H1 (cell line): ENCODE measurements at regions of chr5 and their contacts with region 1.

Region 1: DNA sequence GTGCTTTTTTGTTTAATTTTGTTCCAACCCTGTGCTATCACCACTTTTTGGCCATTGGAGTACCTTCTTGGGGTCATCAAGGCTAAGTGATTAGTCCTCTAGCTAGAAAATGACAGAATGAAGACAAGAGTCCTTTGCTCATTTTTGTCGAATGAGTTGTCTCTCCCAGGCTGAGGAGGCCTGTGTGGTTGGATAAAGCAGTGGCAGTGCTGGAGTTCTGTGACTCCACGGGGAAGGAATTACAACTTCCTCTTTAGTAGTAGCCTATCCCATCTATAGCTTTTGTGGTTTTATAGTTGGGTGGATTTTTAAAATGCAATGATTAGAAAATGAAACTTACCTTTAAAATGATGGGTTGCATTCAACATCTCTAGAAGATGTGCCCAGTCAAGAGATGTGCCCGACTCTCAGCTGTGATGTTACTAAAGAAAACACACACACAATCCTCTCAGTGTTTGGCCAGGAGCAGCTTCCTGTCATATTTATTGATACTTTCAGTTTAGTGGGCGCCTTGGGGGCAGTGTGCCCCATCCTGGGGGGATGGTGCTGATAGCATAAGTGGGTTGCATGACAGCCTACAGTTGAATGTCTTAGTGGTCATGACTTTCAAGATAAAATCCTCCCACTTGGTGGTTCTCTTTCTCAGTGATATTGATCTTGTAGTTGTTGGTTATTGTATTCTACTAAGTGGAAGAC is 11.9 kb downstream of the OTULINL start:
- DNase-seq: no peak
- H3K4me3 ChIP-seq: no peak overlapping the region
- H3K27ac ChIP-seq: no peak overlapping the region
- H3K4me1 ChIP-seq: no peaks in the 10 kb centered on the region; a peak in 1 of 7 replicates
- H3K27me3 ChIP-seq: no peaks in the 10 kb centered on the region
- CTCF ChIP-seq: no peak
- EP300 ChIP-seq: no peak
- POLR2A ChIP-seq: no peak
- RAD21 ChIP-seq: no peak

Region 2: GRCh38 chr5:14581333-14581890 is 12.1 kb before region 1 on chr5 and contains the start of gene OTULINL:
- CTCF ChIA-PET with region 1: interaction called, 3 read pairs
- POLR2A ChIA-PET with region 1: interaction called, 13 read pairs
- DNase-seq: peak; percentile 59 to 98
- H3K4me3 ChIP-seq: peak within 1 kb of the TSS; percentile 72 to 95 (median 76)
- H3K27ac ChIP-seq: no peak within 1 kb of the TSS; the same call in 1 of the 2 replicates
- H3K4me1 ChIP-seq: peaks cover 0 to 2% (median 0%) of the 10 kb centered on the region in 4 experiments; a peak in 1 of 7 replicates
- H3K27me3 ChIP-seq: peaks cover 2 to 21% (median 10%) of the 10 kb centered on the region in 4 experiments
- CTCF ChIP-seq: no peak
- EP300 ChIP-seq: no peak
- POLR2A ChIP-seq: peak in 1 of 2 experiments; percentile 69; a peak in 2 of 3 replicates
- RAD21 ChIP-seq: no peak
- total RNA-seq, gene OTULINL: 7.7 and 8.3 TPM in 2 replicates